PC-9 (cell line): ENCODE measurements at regions of chr7 and their contacts with region 1.

Region 1: DNA sequence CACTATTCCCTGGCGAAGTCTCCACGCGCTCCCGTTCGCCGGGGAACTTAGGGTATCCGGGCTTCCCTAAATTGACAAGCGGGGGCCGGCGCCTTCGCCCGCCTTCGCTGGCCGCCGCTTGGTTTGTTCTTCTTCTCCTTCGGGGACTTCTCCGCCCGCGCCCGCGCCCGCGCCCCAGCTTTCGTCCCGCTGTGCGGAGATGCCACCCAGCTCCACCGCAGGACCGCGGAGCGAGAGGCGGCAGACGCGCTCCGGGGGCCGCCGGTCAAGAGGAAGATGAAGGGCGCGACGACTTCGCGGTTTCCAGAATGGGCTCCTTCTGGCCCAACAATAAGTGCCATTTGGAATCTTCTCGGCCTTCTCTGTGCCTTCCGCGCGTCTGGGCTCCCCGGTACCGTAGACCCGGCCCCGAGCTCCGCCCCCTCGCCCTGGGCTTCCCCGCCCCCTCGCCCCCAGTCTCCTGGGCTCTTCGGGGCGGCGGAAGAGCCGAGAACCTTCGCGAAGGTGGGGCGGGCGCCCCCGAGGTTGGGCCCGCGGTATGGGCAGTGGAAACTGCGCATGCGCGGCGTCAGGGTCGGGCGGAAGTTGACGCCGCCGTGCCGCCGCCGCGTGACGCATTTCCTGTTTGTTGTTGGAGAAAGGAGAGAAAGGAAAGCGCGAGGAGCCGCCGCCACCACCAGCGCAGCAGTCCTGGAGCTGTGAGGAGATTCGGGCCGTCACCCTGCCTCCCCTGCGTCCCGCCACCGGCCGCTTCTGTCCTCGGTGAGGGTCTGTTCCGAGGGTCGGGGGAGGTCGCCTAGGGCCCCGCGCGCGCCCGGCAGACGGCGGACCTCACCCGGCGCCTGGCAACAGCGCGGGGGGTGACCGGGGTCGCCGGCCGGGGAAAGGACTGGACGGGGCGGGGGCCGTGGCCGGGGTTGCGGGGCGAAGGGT is at the start of gene DNAJB6:
- DNase-seq: peak; percentile 83 to 95
- H3K4me3 ChIP-seq: peak within 1 kb of the TSS; percentile 90
- H3K27ac ChIP-seq: peak within 1 kb of the TSS; percentile 66
- H3K4me1 ChIP-seq: peaks cover 36% of the 10 kb centered on the region
- H3K27me3 ChIP-seq: no peaks in the 10 kb centered on the region
- CTCF ChIP-seq: no peak
- total RNA-seq, gene DNAJB6: 137 and 182 TPM in 2 replicates

Region 2: DNA sequence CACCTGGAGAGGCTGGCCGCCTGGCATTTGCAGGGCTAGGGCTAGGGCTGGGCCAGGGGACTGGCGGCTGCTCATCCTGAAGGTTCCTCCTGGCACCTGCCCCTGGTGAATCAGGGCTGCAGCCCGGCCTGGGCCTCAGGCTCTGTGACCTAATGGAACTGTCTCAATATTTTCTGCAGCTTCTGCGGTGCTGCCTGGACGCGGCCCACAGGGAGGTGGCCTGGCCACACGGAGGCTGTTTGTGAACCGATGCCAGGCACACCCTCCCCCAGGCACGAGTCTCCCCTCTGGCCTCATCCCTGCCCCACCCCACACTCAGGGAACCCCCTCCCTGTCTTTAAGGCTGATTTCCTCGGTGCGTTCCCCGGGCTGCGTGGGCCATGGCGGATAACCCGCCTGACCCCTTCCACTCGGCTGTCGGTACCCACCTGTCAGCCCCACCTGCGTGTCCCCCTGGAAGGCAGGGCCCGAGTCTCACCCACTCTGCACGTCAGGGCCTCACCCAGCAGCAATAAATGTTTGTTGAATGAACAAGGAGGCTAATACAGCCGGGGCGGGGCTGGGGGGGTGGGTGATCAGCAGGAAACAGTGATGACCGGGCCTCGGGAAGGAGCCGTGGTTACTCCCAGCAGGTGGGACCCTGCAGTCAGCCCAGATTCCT is 54.4 kb before region 1 on chr7:
- CTCF ChIA-PET with region 1: interaction called, 6 read pairs
- POLR2A ChIA-PET with region 1: interaction called, 5 read pairs
- intact Hi-C with region 1: loop called (anchors 2 kb)
- DNase-seq: peak; percentile 42 to 76
- H3K4me3 ChIP-seq: peak overlapping the region; percentile 32; the same call in 1 of the 2 replicates
- H3K27ac ChIP-seq: peak overlapping the region; percentile 55
- H3K4me1 ChIP-seq: peaks cover 19% of the 10 kb centered on the region
- H3K27me3 ChIP-seq: no peaks in the 10 kb centered on the region
- CTCF ChIP-seq: no peak

Region 3: GRCh38 chr7:157309990-157310668 is 26.5 kb before region 1 on chr7:
- CTCF ChIA-PET with region 1: interaction called, 10 read pairs
- POLR2A ChIA-PET with region 1: interaction called, 5 read pairs
- intact Hi-C with region 1: loop called (anchors 2 kb)
- DNase-seq: peak; percentile 78 to 99
- H3K4me3 ChIP-seq: peak overlapping the region; percentile 1; the same call in 1 of the 2 replicates
- H3K27ac ChIP-seq: peak overlapping the region; percentile 91
- H3K4me1 ChIP-seq: peaks cover 42% of the 10 kb centered on the region
- H3K27me3 ChIP-seq: no peaks in the 10 kb centered on the region
- CTCF ChIP-seq: no peak

Region 4: DNA sequence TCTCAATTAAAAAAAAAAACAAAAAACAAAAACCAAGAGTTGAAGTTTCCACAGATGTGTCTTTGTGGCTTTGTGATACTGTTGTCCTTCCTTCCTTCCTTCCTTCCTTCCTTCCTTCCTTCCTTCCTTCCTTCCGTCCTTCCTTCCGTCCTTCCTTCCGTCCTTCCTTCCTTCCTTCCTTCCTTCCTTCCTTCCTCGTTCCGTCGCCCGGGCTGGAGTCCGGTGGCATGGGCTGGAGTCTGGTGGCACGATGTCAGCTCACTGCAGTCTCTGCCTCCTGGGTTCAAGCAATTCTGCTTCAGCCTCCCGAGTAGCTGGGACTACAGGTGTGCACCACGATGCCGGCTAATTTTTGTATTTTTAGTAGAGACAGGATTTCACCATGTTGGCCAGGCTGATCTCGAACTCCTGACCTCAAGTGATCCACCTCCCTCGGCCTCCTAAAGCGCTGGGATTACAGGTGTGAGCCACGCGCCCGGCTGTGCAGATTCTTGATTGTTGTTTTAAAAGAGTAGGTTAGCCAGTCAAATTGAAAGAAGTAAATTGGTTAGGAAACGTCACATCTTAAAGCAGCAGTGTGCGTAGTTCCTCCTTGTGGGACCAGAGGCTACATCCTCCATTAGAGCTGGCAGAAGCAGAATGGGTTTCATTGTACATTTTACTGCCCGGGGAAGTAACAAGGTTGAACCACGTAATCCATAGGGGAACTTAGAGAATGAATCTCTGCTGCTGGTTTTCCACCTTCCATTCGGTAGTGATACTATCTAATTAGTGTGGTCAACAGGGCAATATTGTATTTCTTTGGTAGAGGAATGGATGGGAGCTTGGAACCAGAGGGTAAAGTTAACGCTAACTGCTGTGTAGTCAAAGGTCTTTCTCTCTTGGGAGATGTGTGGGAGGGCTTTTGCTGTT is 20.7 kb after region 1 on chr7:
- CTCF ChIA-PET with region 1: no interaction called
- POLR2A ChIA-PET with region 1: interaction called, 8 read pairs
- intact Hi-C with region 1: loop called (anchors 2 kb)
- DNase-seq: no peak
- H3K4me3 ChIP-seq: no peak overlapping the region
- H3K27ac ChIP-seq: no peak overlapping the region
- H3K4me1 ChIP-seq: peaks cover 31% of the 10 kb centered on the region
- H3K27me3 ChIP-seq: no peaks in the 10 kb centered on the region
- CTCF ChIP-seq: no peak

Region 5: GRCh38 chr7:157429001-157429679 is 92.5 kb after region 1 on chr7:
- CTCF ChIA-PET with region 1: no interaction called
- POLR2A ChIA-PET with region 1: no interaction called
- intact Hi-C with region 1: no loop called
- DNase-seq: no peak
- H3K4me3 ChIP-seq: no peak overlapping the region
- H3K27ac ChIP-seq: no peak overlapping the region
- H3K4me1 ChIP-seq: no peaks in the 10 kb centered on the region
- H3K27me3 ChIP-seq: no peaks in the 10 kb centered on the region
- CTCF ChIP-seq: no peak